ENCODE measurements at regions of chr3 and their contacts with region 1.

Region 1: GRCh38 chr3:138051946-138052802 is 42.2 kb downstream of the CLDN18 start:
- DNase-seq: peak; percentile 67
- H3K4me3 Mint-ChIP-seq: no peak overlapping the region
- H3K27ac Mint-ChIP-seq: no peak overlapping the region
- H3K4me1 Mint-ChIP-seq: no peaks in the 10 kb centered on the region
- H3K27me3 Mint-ChIP-seq: no peaks in the 10 kb centered on the region
- CTCF ChIP-seq: peak; percentile 86

Region 2: GRCh38 chr3:137105277-137105977 is 946.7 kb before region 1 on chr3:
- CTCF ChIA-PET with region 1: interaction called, 20 read pairs
- POLR2A ChIA-PET with region 1: no interaction called
- intact Hi-C with region 1: loop called (anchors 1 kb)
- DNase-seq: peak; percentile 69
- H3K4me3 Mint-ChIP-seq: no peak overlapping the region
- H3K27ac Mint-ChIP-seq: no peak overlapping the region
- H3K4me1 Mint-ChIP-seq: no peaks in the 10 kb centered on the region
- H3K27me3 Mint-ChIP-seq: no peaks in the 10 kb centered on the region
- CTCF ChIP-seq: peak; percentile 56

Region 3: GRCh38 chr3:137121704-137122314 is 930.4 kb before region 1 on chr3:
- CTCF ChIA-PET with region 1: interaction called, 4 read pairs
- POLR2A ChIA-PET with region 1: no interaction called
- intact Hi-C with region 1: loop called (anchors 5 kb)
- DNase-seq: peak; percentile 58
- H3K4me3 Mint-ChIP-seq: no peak overlapping the region
- H3K27ac Mint-ChIP-seq: no peak overlapping the region
- H3K4me1 Mint-ChIP-seq: no peaks in the 10 kb centered on the region
- H3K27me3 Mint-ChIP-seq: no peaks in the 10 kb centered on the region
- CTCF ChIP-seq: peak; percentile 52

Region 4: DNA sequence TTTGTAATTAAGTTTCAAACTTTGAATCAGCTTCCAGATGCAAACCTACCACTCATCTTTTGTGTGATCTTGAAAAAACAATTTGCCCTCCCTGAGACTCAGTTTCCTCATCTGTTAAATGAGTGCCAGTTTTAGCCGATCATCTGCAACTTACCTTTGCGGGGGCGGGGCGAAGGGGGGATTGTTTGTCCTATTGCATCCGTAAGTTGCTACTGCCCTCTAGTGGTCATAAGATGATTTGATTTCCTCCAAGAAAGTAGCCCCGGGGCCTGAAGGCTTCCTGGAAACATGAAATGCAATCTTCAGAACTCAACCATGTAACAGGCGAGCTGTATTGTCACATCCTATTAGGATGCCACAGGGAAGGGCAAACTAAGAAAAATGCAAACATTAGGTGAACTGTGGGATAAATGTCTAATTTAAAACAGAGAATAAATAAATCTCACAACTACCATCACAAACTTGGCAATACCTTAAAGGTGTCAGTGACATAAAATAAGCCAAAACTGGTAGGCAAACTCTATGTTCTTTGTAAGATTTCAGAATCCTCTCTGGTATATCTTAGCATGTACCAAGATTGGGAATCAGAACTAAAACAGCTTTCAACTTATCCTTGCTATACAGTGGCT is 105.7 kb before region 1 on chr3:
- CTCF ChIA-PET with region 1: interaction called, 4 read pairs
- POLR2A ChIA-PET with region 1: no interaction called
- intact Hi-C with region 1: loop called (anchors 2 kb)
- DNase-seq: peak; percentile 81
- H3K4me3 Mint-ChIP-seq: no peak overlapping the region
- H3K27ac Mint-ChIP-seq: no peak overlapping the region
- H3K4me1 Mint-ChIP-seq: no peaks in the 10 kb centered on the region
- H3K27me3 Mint-ChIP-seq: peaks cover 24% of the 10 kb centered on the region
- CTCF ChIP-seq: peak; percentile 77

Region 5: DNA sequence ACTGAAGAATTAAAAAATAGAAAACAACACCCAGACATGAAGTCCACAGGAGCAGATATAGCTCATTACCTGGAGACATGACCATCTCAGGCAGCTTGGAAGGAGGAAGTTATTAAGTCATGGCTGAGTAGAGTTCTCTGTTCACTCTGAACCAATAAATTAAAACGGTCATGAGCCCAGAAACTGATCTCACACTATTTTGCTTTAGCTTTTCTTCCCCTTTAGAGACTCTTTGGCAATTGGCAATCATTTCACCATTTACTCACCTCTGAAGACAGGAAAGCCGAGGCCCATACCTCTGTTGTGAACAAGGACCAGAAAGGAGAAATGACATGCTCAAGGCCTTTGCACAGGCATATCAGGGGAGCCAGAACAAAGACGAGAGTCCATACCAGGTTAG is 15.6 kb before region 1 on chr3:
- CTCF ChIA-PET with region 1: interaction called, 40 read pairs
- POLR2A ChIA-PET with region 1: no interaction called
- intact Hi-C with region 1: no loop called
- DNase-seq: no peak
- H3K4me3 Mint-ChIP-seq: no peak overlapping the region
- H3K27ac Mint-ChIP-seq: no peak overlapping the region
- H3K4me1 Mint-ChIP-seq: no peaks in the 10 kb centered on the region
- H3K27me3 Mint-ChIP-seq: no peaks in the 10 kb centered on the region
- CTCF ChIP-seq: no peak

Region 6: DNA sequence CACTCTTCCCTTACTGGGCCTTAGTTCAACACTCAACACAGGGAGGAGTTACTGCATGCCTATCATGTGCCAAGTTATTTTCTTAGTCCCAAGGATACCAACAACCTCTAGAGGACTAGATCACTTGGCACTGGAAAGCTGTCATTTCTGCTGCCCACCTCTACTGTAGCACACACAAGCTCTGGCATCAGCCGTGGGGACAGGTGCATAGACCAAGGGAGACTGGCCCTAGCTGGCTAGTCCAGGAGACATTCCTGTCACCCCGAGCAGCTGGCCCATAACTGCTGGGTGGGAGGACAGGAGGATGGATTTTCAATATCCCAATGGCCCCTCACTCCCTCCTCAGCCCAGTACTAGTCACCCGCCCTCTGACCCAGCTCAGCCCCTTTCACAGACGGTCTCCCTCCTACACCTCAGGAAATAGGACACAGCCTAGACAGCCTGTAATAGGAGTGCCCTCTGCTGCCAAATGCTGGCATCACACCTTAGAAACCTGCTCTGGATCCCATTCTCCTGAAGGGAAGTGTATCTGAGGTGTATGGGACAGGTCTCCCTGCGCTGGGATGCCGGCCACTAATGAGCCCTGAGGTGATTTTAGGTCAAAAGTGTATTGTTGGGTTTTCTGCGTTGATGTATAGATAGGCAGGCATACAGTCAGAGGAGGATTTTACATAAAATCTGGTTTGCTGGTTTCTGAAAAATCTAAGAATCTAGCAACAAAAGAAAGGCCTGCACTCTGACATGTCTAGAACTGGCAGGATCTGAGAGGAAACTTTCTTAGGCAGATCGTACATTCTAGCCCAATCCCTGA is 66.6 kb after region 1 on chr3:
- CTCF ChIA-PET with region 1: interaction called, 29 read pairs
- POLR2A ChIA-PET with region 1: no interaction called
- intact Hi-C with region 1: no loop called
- DNase-seq: peak; percentile 87
- H3K4me3 Mint-ChIP-seq: no peak overlapping the region
- H3K27ac Mint-ChIP-seq: no peak overlapping the region
- H3K4me1 Mint-ChIP-seq: peaks cover 19% of the 10 kb centered on the region
- H3K27me3 Mint-ChIP-seq: no peaks in the 10 kb centered on the region
- CTCF ChIP-seq: peak; percentile 91

Region 7: DNA sequence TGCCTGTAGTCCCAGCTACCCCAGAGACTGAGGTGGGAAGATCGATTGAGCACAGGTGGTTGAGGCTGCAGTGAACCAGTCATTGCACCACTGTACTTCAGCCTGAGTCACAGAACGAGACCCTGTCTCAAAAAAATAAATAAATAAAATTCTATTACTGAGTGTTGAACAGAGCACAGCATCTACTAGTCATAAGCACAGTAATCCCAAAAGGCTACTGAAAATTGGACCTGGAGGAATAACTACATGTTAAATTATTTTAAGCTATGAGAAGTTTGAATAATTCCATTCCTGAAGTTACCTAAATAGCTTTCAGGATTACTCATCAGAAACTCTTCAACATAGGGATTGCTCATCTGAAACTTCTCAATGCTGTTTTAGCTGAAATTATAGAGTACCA is 178.4 kb after region 1 on chr3:
- CTCF ChIA-PET with region 1: no interaction called
- POLR2A ChIA-PET with region 1: no interaction called
- intact Hi-C with region 1: no loop called
- DNase-seq: no peak
- H3K4me3 Mint-ChIP-seq: no peak overlapping the region
- H3K27ac Mint-ChIP-seq: no peak overlapping the region
- H3K4me1 Mint-ChIP-seq: peaks cover 7% of the 10 kb centered on the region
- H3K27me3 Mint-ChIP-seq: no peaks in the 10 kb centered on the region
- CTCF ChIP-seq: no peak

Region 8: DNA sequence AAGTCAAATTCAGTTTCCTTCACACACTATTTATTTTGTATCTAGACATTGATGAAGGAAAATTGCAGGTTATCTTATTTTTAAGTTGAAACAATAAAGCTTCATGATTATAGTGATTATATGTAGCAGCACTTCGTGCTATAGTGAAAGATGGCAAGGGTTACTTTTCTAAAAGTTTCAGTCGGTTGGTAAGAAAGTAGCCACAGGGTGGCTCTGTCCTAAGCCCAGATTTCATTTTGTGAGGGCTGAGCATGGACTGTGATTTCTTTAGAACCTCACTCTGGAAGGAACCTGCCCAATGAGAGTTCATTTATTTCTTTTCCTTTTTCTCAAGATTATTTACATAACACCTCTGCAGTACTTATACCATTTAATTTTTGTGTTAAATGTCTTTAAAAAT is 210.9 kb after region 1 on chr3:
- CTCF ChIA-PET with region 1: no interaction called
- POLR2A ChIA-PET with region 1: no interaction called
- intact Hi-C with region 1: no loop called
- DNase-seq: no peak
- H3K4me3 Mint-ChIP-seq: no peak overlapping the region
- H3K27ac Mint-ChIP-seq: no peak overlapping the region
- H3K4me1 Mint-ChIP-seq: no peaks in the 10 kb centered on the region
- H3K27me3 Mint-ChIP-seq: no peaks in the 10 kb centered on the region
- CTCF ChIP-seq: no peak